ENCODE measurements at regions of chr12 and their contacts with region 1.

Region 1: DNA sequence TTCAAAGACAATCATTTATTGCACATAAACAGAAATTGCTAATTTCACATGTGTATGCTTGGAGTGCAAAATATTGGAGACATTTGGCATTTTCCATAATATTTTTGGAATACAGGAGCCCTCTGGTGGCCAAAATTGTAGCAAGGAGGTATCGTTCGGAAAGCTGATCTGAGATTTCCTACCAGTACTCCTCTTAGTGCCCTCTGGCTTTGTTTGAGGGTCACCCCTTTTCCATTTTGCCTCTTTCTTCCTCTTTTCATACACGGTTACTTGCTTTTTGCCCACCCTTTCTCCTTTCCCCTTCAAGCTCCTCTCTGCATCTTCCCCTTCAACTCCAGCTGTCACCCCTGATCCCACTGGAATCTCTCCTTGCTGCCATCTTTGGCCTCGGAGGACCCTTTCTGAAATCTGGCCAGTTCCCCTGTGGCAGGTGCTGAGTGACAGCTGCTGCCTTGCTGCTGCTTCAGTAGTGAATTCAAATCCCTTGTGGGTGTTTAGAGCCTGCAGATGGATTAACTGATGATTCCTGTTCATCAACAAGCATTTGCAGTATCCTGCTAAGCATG is 164.6 kb upstream of the PARP11 start:
- DNase-seq: peak; percentile 38

Region 2: GRCh38 chr12:3885277-3886094 is 152.3 kb before region 1 on chr12:
- CTCF ChIA-PET with region 1: interaction called, 61 read pairs
- POLR2A ChIA-PET with region 1: interaction called, 3 read pairs
- DNase-seq: peak; percentile 19

Region 3: DNA sequence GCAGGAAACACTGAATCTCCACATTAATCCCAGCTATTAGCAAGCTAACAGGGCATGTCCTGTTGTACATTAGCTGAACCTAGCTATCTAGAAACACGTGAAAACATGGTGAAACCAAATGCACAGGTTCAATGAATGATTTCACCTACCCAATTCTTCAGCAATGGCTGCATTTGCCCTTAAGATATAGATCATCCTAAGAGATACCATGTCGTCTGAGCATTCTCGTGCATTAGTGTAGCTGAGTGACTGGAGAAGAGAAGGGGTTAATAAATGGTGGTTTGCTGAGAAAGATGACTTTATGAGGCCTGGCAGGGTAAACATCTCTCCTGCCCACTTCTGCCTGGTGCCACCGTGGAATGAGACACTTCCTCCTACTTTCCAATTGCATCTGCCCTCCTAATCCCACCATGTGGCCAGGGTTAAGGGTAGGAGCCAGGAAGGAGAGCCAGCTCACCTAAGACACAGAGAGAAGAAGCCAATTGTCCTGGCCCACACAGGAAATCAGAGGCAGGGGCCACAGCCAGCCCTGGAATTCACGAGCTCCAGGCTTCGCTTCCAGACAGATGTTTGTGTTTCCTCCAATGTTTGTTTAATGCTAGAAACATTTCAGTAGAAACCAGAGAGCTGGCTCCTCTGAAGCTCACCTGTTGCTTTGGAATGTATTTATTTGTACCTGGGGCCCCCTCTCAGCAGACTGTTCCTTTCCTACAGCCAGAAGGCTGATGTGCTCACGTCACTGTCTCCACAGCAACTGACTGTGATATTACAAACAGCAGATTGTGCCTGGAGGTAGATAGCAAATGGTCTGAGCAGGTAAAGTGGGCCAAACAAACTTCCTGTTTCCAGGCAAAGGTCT is 38.6 kb before region 1 on chr12:
- CTCF ChIA-PET with region 1: interaction called, 20 read pairs
- POLR2A ChIA-PET with region 1: interaction called, 9 read pairs
- DNase-seq: no peak

Measured in HEK293T (cell line).